CD8-positive, alpha-beta memory T cell (primary cell): ENCODE measurements at regions of chr22 and their contacts with region 1.

Region 1: DNA sequence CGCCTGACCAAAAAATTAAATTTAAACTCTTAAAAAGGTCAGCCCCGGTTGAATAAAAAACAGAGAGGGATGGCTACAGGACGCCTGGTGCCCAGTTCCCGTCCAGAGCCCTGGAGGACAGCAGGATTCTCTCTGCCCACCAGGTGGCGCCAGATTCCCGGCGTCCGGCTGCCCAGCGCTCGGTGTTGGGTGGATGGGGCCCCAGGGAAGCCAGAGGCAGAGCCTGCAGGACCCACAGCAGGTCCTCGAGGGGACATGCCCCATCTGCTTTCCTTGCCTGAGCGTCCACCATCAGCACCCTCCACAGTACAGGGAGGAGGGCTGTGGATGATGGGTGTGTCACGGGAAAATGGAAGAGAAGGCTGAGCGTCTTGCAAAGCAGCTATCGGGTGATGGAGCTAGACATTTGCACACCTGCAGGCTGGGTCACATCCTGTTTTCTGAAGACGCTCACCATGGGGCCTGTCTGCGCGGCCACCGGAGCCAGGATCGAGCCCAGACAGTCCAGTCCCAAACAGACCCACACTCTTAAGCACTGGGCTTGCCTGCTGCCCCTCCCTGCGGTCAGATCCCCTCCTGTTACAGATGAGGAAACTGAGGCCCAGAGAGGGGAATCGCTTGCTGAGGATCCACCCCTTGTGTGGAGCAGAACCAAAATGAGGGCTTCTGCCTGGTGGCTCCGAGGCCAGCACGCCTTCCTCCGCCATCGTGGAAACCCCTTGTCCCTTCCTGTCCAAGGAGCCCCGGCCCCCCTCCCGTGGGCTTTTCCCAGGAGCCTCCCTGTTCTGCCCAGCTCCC is 18.5 kb upstream of the CBX7 start:
- DNase-seq: peak; percentile 76 to 86 (median 81)
- H3K4me3 ChIP-seq: peak overlapping the region; percentile 64
- H3K4me3 Mint-ChIP-seq: peak overlapping the region; percentile 44 to 79 (median 74)
- H3K27ac ChIP-seq: peak overlapping the region; percentile 61
- H3K27ac Mint-ChIP-seq: peak overlapping the region; percentile 94 to 99 (median 96)
- H3K4me1 ChIP-seq: peaks cover 53% of the 10 kb centered on the region
- H3K4me1 Mint-ChIP-seq: peaks cover 45 to 54% (median 51%) of the 10 kb centered on the region in 3 donors
- H3K27me3 ChIP-seq: no peaks in the 10 kb centered on the region
- H3K27me3 Mint-ChIP-seq: peaks cover 0 to 5% of the 10 kb centered on the region in 2 donors

Region 2: DNA sequence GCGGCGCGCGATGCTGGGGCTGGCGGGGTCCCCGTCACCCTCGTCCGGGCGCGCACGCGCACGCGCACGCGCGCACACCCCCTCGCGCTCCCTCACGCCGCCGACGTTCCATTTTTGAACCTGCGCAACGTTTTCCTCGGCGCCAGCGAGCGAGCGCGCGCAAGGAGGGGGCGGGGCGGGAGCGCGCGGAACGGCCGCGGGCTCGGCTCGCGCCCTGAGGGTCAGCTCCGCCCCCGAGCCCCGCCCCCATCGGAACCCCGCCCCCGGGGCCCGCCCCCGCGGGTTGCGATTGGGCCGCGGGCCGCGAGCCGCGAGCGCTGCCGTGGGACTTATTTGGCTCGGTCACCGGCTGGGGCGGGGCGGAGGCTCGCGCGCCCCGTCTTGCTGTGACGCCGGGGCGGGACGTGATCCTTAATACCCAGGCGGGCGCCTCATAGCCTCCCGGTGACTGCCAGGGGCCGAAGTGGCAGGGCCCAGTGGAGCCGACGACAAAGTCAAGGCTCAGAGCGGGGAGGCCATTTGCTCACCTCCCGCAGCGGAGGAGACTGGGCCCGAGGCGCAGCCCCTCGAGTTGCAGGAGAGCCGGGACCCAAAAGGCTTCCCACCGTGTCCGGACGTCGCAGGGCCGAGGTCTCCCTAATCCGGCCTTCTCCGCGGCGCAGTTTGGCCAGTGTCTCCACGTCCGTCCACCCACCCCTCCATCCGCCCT is 18.4 kb before region 1 on chr22 and contains the start of gene CBX7:
- CTCF ChIA-PET with region 1: interaction called, 11 read pairs
- POLR2A ChIA-PET with region 1: interaction called, 5 read pairs
- DNase-seq: peak; percentile 90 to 95 (median 94)
- H3K4me3 ChIP-seq: peak within 1 kb of the TSS; percentile 91
- H3K4me3 Mint-ChIP-seq: peak within 1 kb of the TSS; percentile 83 to 94 (median 86)
- H3K27ac ChIP-seq: peak within 1 kb of the TSS; percentile 83
- H3K27ac Mint-ChIP-seq: peak within 1 kb of the TSS; percentile 89 to 97 (median 95)
- H3K4me1 ChIP-seq: peaks cover 49% of the 10 kb centered on the region
- H3K4me1 Mint-ChIP-seq: peaks cover 39 to 48% (median 40%) of the 10 kb centered on the region in 3 donors
- H3K27me3 ChIP-seq: no peaks in the 10 kb centered on the region
- H3K27me3 Mint-ChIP-seq: peaks cover 0 to 15% of the 10 kb centered on the region in 2 donors
- total RNA-seq, gene CBX7: 26.1 to 26.4 TPM

Region 3: DNA sequence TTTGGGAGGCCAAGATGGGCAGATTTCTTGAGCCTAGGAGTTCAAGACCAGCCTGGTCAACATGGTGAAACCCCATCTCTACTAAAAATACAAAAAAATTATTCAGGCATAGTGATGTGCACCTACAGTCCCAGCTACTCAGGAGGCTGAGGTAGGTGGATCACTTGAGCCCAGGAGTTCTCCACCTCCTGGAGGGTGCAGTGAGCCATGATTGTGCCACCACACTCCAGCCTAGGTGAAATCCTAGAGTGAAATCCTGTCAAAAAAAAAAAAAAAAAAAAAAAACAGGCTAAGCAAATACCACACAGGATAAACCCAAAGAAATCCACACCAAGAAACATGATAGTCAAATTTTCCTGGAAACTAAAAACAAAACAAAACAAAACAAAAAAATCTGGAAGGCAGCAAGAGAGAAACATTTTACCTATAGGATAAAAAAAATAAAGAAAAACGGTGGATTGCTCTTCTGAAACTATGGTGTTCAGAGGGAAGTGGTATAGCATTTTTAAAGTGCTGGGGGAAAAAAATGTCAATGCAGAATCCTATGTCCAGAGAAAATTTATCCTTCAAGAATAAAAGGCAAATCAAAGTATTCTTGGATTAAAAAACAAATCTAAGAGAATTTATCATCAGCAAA is 23.0 kb after region 1 on chr22:
- CTCF ChIA-PET with region 1: interaction called, 10 read pairs
- POLR2A ChIA-PET with region 1: no interaction called
- DNase-seq: no peak
- H3K4me3 ChIP-seq: no peak overlapping the region
- H3K4me3 Mint-ChIP-seq: no peak overlapping the region
- H3K27ac ChIP-seq: no peak overlapping the region
- H3K27ac Mint-ChIP-seq: no peak overlapping the region
- H3K4me1 ChIP-seq: no peaks in the 10 kb centered on the region
- H3K4me1 Mint-ChIP-seq: peaks cover 0 to 5% (median 4%) of the 10 kb centered on the region in 3 donors
- H3K27me3 ChIP-seq: no peaks in the 10 kb centered on the region
- H3K27me3 Mint-ChIP-seq: peaks cover 0 to 5% of the 10 kb centered on the region in 2 donors

Region 4: DNA sequence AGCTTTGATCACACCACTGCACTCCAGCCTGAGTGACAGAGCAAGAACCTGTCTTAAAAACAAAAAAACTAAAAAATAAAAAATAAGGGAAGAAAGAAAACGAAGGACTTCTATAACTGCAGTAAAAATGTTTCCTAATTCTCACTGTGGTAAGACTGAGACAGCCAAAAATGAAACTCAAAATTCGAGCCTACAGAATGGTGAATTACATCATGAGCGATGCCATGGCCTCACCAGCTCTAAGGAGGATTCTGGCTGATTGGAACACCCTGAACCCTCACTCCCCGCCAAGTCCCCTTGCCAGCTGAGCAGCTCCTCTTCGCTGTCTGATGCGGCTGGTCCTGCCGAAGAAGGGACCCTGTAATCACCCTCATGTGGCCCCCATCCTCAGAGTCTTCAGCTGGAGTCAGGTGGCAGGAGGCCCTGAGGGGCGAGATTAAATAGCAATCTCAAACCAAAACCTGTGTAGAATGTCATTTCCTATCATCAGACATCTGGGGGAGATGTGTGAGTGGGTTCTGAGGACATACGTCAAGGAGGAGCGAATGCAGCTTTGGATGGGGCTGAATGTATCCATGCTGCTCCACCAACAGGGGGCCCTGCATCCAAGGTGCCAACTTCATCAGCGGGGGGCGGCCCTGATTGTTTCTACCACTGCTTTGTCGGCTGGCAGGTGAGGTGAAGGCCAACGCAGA is 44.5 kb after region 1 on chr22:
- CTCF ChIA-PET with region 1: interaction called, 17 read pairs
- POLR2A ChIA-PET with region 1: interaction called, 3 read pairs
- DNase-seq: peak; percentile 11 to 61 (median 54)
- H3K4me3 ChIP-seq: no peak overlapping the region
- H3K4me3 Mint-ChIP-seq: peak overlapping the region in 5 of 7 donors; percentile 8 to 56 (median 22)
- H3K27ac ChIP-seq: no peak overlapping the region
- H3K27ac Mint-ChIP-seq: peak overlapping the region in 6 of 8 donors; percentile 6 to 85 (median 69)
- H3K4me1 ChIP-seq: no peaks in the 10 kb centered on the region
- H3K4me1 Mint-ChIP-seq: peaks cover 12 to 21% (median 16%) of the 10 kb centered on the region in 3 donors
- H3K27me3 ChIP-seq: no peaks in the 10 kb centered on the region
- H3K27me3 Mint-ChIP-seq: peaks cover 2 to 6% of the 10 kb centered on the region in 2 donors

Region 5: GRCh38 chr22:39236321-39237317 is 65.6 kb after region 1 on chr22:
- CTCF ChIA-PET with region 1: interaction called, 65 read pairs
- POLR2A ChIA-PET with region 1: interaction called, 4 read pairs
- DNase-seq: peak; percentile 41 to 83 (median 63)
- H3K4me3 ChIP-seq: peak overlapping the region; percentile 55
- H3K4me3 Mint-ChIP-seq: peak overlapping the region; percentile 57 to 93 (median 78)
- H3K27ac ChIP-seq: no peak overlapping the region
- H3K27ac Mint-ChIP-seq: peak overlapping the region; percentile 71 to 98 (median 88)
- H3K4me1 ChIP-seq: peaks cover 67% of the 10 kb centered on the region
- H3K4me1 Mint-ChIP-seq: peaks cover 54 to 75% (median 56%) of the 10 kb centered on the region in 3 donors
- H3K27me3 ChIP-seq: no peaks in the 10 kb centered on the region
- H3K27me3 Mint-ChIP-seq: peaks cover 0 to 6% of the 10 kb centered on the region in 2 donors

Region 6: GRCh38 chr22:39259666-39260065 is 88.6 kb after region 1 on chr22:
- CTCF ChIA-PET with region 1: no interaction called
- POLR2A ChIA-PET with region 1: no interaction called
- DNase-seq: no peak
- H3K4me3 ChIP-seq: no peak overlapping the region
- H3K4me3 Mint-ChIP-seq: no peak overlapping the region
- H3K27ac ChIP-seq: no peak overlapping the region
- H3K27ac Mint-ChIP-seq: no peak overlapping the region
- H3K4me1 ChIP-seq: peaks cover 7% of the 10 kb centered on the region
- H3K4me1 Mint-ChIP-seq: peaks cover 8 to 12% (median 8%) of the 10 kb centered on the region in 3 donors
- H3K27me3 ChIP-seq: no peaks in the 10 kb centered on the region
- H3K27me3 Mint-ChIP-seq: peaks cover 0 to 1% of the 10 kb centered on the region in 2 donors

Region 7: GRCh38 chr22:39306581-39307361 is 135.7 kb after region 1 on chr22:
- CTCF ChIA-PET with region 1: interaction called, 113 read pairs
- POLR2A ChIA-PET with region 1: interaction called, 11 read pairs
- DNase-seq: peak; percentile 27 to 67 (median 32)
- H3K4me3 ChIP-seq: no peak overlapping the region
- H3K4me3 Mint-ChIP-seq: no peak overlapping the region
- H3K27ac ChIP-seq: no peak overlapping the region
- H3K27ac Mint-ChIP-seq: peak overlapping the region in 2 of 8 donors; percentile 4 to 65
- H3K4me1 ChIP-seq: no peaks in the 10 kb centered on the region
- H3K4me1 Mint-ChIP-seq: peaks cover 14 to 32% (median 16%) of the 10 kb centered on the region in 3 donors
- H3K27me3 ChIP-seq: no peaks in the 10 kb centered on the region
- H3K27me3 Mint-ChIP-seq: peaks cover 0 to 2% of the 10 kb centered on the region in 2 donors